PC-9 (cell line): ENCODE measurements at regions of chr1 and their contacts with region 1.

Region 1: GRCh38 chr1:14996133-14997050 is 157.2 kb upstream of the TMEM51 start:
- DNase-seq: peak in 1 of 2 experiments; percentile 70
- H3K4me3 ChIP-seq: no peak overlapping the region
- H3K27ac ChIP-seq: no peak overlapping the region
- H3K4me1 ChIP-seq: no peaks in the 10 kb centered on the region
- H3K27me3 ChIP-seq: no peaks in the 10 kb centered on the region
- CTCF ChIP-seq: no peak

Region 2: GRCh38 chr1:14977297-14977931 is 19.0 kb before region 1 on chr1:
- CTCF ChIA-PET with region 1: no interaction called
- POLR2A ChIA-PET with region 1: no interaction called
- intact Hi-C with region 1: loop called (anchors 2 kb)
- DNase-seq: peak; percentile 38 to 82
- H3K4me3 ChIP-seq: no peak overlapping the region
- H3K27ac ChIP-seq: no peak overlapping the region
- H3K4me1 ChIP-seq: no peaks in the 10 kb centered on the region
- H3K27me3 ChIP-seq: no peaks in the 10 kb centered on the region
- CTCF ChIP-seq: no peak